ENCODE measurements at regions of chr19 and their contacts with region 1.

Region 1: DNA sequence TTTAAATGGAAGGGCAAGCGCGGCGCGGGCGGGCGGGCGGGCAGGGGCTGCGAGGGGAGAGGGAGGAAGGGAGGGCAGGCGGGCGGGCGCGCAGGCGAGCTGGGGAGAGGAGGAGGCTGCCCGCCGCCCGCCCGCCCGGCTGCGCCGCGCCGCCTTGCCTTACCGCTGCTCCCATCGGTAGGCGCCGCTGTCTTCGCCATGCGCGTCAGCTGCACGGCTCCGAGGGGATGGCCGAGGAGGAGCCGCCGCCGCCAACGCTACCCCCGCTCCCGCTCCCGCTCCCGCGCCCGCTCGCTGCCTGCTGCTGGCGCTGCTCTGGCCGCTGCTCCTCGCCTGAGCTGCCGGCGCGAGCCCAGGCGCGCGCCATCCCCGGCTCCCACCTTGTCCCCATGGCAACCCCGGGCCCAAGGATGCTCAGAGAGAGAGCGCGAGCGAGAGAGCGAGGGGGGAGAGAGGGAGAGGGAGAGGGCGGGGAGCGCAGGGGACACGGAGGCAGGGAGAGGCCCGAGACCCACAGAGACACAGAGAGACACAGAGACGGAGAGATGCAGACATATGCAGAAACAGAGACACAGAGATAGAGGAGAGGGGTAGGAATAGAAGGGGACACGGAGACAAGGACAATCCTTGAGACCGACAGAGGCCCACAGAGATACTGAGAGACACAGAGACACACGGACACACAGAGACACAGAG is 40.3 kb downstream of the DEDD2 start:
- DNase-seq: peak in 1 of 2 experiments; percentile 87
- H3K4me3 ChIP-seq: peak overlapping the region; percentile 28 to 79 (median 48)
- H3K27ac ChIP-seq: no peak overlapping the region
- H3K4me1 ChIP-seq: peaks cover 0 to 10% (median 7%) of the 10 kb centered on the region in 4 experiments; a peak in 5 of 7 replicates
- H3K27me3 ChIP-seq: peaks cover 40 to 72% (median 64%) of the 10 kb centered on the region in 4 experiments
- CTCF ChIP-seq: peak in 2 of 3 experiments; percentile 32 to 62; a peak in 2 of 4 replicates
- EP300 ChIP-seq: no peak
- POLR2A ChIP-seq: no peak
- RAD21 ChIP-seq: peak in 1 of 2 experiments; percentile 22; a peak in 3 of 4 replicates

Region 2: GRCh38 chr19:42140125-42140754 is 36.9 kb before region 1 on chr19:
- CTCF ChIA-PET with region 1: interaction called, 159 read pairs
- POLR2A ChIA-PET with region 1: interaction called, 5 read pairs
- DNase-seq: peak; percentile 31 to 91
- H3K4me3 ChIP-seq: no peak overlapping the region
- H3K27ac ChIP-seq: no peak overlapping the region
- H3K4me1 ChIP-seq: peaks cover 0 to 6% (median 0%) of the 10 kb centered on the region in 4 experiments; a peak in 2 of 7 replicates
- H3K27me3 ChIP-seq: no peaks in the 10 kb centered on the region; a peak in 3 of 7 replicates
- CTCF ChIP-seq: no peak
- EP300 ChIP-seq: no peak
- POLR2A ChIP-seq: no peak
- RAD21 ChIP-seq: peak; percentile 8 to 29; a peak in 1 of 4 replicates

Region 3: GRCh38 chr19:42166316-42166715 is 10.8 kb before region 1 on chr19:
- CTCF ChIA-PET with region 1: interaction called, 17 read pairs
- POLR2A ChIA-PET with region 1: interaction called, 4 read pairs
- DNase-seq: no peak
- H3K4me3 ChIP-seq: no peak overlapping the region
- H3K27ac ChIP-seq: no peak overlapping the region
- H3K4me1 ChIP-seq: no peaks in the 10 kb centered on the region
- H3K27me3 ChIP-seq: no peaks in the 10 kb centered on the region; a peak in 2 of 7 replicates
- CTCF ChIP-seq: no peak
- EP300 ChIP-seq: no peak
- POLR2A ChIP-seq: no peak
- RAD21 ChIP-seq: no peak

Region 4: GRCh38 chr19:42207767-42208271 is 30.7 kb after region 1 on chr19:
- CTCF ChIA-PET with region 1: no interaction called
- POLR2A ChIA-PET with region 1: no interaction called
- DNase-seq: no peak
- H3K4me3 ChIP-seq: no peak overlapping the region
- H3K27ac ChIP-seq: no peak overlapping the region
- H3K4me1 ChIP-seq: peaks cover 0 to 10% (median 4%) of the 10 kb centered on the region in 4 experiments; a peak in 3 of 7 replicates
- H3K27me3 ChIP-seq: no peaks in the 10 kb centered on the region
- CTCF ChIP-seq: no peak
- EP300 ChIP-seq: no peak
- POLR2A ChIP-seq: no peak
- RAD21 ChIP-seq: no peak

Measured in H1 (cell line).